PC-9 (cell line): ENCODE measurements at regions of chr2 and their contacts with region 1.

Region 1: DNA sequence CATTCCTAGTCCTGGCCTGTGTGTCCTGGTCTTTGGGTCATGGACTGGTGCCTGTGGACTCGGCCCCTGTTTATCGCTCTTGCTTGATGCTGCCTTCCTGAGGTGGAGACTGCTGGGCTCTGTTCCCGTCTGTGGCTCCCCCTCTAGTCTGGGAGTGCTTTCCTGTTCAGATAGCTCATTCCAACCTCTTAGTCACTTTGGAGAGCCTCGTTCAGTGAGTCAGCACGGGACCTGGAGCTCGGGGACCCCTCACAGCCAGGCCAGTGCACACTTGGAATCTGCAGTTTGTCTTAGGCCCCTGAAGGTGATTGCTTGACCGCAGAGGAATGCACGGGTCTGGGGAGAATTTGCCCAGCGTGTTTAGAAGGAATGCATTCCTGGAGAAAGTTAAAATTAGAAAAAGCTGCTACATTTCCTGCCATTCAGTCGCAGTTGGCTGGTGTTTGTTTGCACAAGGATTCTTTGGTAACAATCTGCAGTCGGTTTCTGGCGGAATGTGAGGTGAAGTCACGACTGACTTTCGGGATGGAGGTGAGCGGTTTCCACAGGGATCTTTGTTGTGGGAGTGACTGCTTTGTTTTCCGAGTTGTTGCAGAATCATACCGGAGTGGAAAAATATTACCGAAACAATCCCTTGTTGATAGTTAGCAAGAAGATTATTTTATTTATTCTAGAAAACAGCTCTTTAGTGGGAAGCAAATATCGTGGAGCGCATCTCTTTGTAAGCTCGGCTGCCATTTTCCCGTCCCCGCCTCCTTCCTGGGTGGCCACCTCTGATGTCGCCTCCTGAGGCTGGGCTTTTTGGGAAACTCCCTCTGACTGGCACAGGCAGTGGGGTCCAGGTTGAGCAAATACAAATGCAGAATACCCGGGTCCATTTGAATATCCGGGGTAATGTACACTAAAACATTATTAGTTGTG is 29.6 kb downstream of the SH3BP4 start:
- DNase-seq: peak; percentile 98 to 100
- H3K4me3 ChIP-seq: peak overlapping the region; percentile 52
- H3K27ac ChIP-seq: peak overlapping the region; percentile 96
- H3K4me1 ChIP-seq: peaks cover 78% of the 10 kb centered on the region
- H3K27me3 ChIP-seq: no peaks in the 10 kb centered on the region
- CTCF ChIP-seq: no peak

Region 2: GRCh38 chr2:234135720-234136221 is 845.7 kb before region 1 on chr2:
- CTCF ChIA-PET with region 1: no interaction called
- POLR2A ChIA-PET with region 1: no interaction called
- intact Hi-C with region 1: loop called (anchors 2 kb)
- DNase-seq: peak; percentile 91 to 93
- H3K4me3 ChIP-seq: no peak overlapping the region
- H3K27ac ChIP-seq: peak overlapping the region; percentile 66
- H3K4me1 ChIP-seq: peaks cover 30% of the 10 kb centered on the region
- H3K27me3 ChIP-seq: no peaks in the 10 kb centered on the region
- CTCF ChIP-seq: peak; percentile 90

Region 3: DNA sequence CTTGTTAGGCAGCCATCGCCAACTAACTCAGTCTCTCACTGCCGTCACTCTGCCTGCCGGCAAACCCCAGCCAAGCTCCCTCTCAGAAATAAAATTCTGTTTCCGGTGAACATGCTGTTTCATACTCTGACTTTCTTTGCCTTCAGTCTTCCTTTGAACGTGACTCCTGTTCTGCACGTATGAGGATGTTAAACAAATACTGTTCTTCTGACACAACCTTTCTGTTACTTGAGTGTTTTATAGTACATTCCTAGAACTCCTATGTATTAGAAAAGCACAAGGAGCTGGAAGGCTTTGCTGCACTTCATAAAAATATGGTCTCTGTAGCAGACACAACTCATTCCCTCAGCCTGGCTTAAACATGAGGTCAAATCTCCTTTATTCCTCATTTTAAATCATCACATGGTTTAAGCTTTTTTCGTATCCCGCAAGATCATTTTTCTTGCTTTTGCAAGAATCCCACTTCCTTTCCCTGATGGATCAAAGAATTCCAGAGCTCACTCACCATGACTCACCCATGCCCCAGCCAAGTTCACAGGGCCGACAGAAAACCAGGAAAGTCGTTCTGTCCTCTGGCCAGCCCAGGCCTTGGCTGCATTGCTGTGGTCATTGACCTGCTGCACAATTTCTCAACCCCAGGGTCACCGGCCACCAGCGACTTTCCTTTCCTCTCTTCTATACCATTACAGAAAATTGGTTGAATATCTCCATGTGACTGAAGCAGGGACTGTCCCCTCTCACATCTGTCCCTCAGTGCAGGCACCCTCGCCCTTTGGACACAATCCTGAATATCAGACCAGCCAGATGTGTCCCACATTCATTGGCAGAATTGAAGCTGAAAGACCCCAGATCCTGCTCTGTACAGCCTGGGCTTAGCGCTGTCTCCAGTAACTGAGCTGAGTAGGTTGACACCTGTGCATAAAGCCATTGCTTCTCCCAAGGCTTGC is 301.4 kb before region 1 on chr2:
- CTCF ChIA-PET with region 1: no interaction called
- POLR2A ChIA-PET with region 1: no interaction called
- intact Hi-C with region 1: loop called (anchors 5 kb)
- DNase-seq: peak; percentile 86 to 96
- H3K4me3 ChIP-seq: no peak overlapping the region
- H3K27ac ChIP-seq: peak overlapping the region; percentile 90
- H3K4me1 ChIP-seq: peaks cover 75% of the 10 kb centered on the region
- H3K27me3 ChIP-seq: no peaks in the 10 kb centered on the region
- CTCF ChIP-seq: no peak

Region 4: DNA sequence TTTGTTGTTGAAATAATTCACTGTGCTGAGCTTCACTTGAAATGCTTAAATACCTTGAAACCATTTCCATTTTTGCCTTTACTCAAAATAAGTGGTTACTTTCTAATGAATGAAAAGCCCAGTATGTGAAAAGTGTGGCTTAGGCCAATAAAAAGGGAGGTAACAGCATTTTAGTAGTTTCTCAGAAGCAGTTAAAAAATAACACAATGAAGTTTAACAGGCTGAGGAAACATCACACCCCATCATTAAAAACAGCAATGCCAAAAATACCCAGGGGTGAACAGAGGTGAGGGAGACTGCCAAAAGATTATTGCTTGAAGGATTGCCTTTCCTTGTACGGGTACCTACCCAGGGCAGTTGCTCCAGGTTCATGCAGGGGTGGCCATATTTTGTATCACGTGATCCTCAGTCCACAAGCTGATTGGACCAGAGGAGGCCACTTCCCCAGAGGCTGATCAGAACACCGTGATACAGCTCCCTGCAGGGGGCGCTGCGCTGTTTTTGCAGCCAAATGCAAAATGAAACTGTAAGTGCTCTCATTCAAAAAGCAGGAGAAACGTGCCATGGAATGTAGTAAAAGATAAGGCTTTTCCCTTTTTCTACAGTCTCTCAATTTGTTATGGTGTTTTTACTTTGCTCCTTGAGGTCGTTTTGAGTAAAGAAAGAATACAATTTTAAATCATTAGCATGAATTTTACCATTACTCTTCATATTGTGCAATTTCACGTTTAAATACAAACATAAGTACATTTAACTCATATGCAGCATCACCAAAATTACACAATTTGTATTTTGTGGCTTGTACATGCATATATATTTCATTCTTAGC is 99.8 kb before region 1 on chr2:
- CTCF ChIA-PET with region 1: interaction called, 9 read pairs
- POLR2A ChIA-PET with region 1: interaction called, 3 read pairs
- intact Hi-C with region 1: loop called (anchors 1 kb)
- DNase-seq: peak; percentile 88 to 92
- H3K4me3 ChIP-seq: peak overlapping the region; percentile 41; the same call in 1 of the 2 replicates
- H3K27ac ChIP-seq: peak overlapping the region; percentile 82
- H3K4me1 ChIP-seq: peaks cover 47% of the 10 kb centered on the region
- H3K27me3 ChIP-seq: no peaks in the 10 kb centered on the region
- CTCF ChIP-seq: peak; percentile 97

Region 5: DNA sequence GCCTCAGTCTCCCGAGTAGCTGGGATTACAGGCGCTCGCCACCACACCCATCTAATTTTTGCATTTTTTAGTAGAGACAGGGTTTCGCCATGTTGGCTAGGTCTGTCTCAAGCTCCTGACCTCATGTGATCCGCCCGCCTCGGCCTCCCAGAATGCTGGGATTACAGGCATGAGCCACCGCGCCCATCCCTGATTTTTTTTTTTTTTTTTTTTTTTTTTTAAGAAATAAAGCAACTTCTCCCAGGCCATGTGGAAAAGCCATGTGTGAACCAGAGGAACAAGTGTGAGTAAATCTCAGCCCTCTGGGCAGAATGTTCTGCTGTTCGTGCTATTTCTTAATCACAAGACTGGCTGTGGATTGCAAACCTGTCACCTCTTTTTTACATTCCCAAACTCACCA is 36.0 kb before region 1 on chr2:
- CTCF ChIA-PET with region 1: no interaction called
- POLR2A ChIA-PET with region 1: no interaction called
- intact Hi-C with region 1: no loop called
- DNase-seq: no peak
- H3K4me3 ChIP-seq: no peak overlapping the region
- H3K27ac ChIP-seq: no peak overlapping the region
- H3K4me1 ChIP-seq: no peaks in the 10 kb centered on the region
- H3K27me3 ChIP-seq: no peaks in the 10 kb centered on the region
- CTCF ChIP-seq: no peak

Region 6: GRCh38 chr2:235008584-235009044 is 27.2 kb after region 1 on chr2:
- CTCF ChIA-PET with region 1: interaction called, 5 read pairs
- POLR2A ChIA-PET with region 1: interaction called, 14 read pairs
- intact Hi-C with region 1: loop called (anchors 1 kb)
- DNase-seq: peak; percentile 83 to 99
- H3K4me3 ChIP-seq: peak overlapping the region; percentile 36
- H3K27ac ChIP-seq: peak overlapping the region; percentile 89
- H3K4me1 ChIP-seq: peaks cover 65% of the 10 kb centered on the region
- H3K27me3 ChIP-seq: no peaks in the 10 kb centered on the region
- CTCF ChIP-seq: no peak

Region 7: DNA sequence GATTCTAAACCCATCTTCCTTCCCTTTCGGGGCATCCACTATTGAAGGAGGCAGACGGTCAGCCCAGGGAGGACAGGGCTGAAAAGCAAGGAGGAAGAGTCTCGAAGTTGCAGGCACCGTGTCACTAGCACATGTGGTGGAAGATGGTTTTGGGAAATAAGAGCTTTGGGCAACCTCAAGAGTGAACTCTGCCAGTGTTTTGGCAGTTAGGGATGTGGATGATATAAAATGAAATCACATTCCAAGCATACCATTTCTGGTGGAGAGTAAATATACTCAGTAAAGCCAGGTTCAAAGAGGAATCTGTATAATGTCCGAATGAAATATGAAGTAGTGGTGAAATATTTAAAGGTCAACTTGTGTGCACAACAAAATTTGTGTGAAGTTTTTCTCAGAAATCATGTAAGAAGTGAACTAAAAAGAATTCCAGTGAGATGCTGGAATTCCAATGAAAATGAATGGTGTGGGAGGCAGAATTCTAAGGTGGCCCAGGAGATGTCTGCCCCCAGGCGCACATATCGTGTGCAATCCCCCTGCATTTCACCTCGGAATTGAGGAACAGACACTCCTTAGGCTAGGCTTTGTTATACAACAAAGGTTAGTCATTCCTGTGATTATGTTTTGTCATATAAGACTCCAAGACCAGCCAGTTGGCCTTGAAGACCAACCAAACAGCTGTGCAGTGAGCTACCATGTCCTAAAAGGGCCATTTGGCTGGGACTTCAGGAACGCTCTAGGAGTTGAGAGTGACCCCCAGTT is 117.5 kb after region 1 on chr2:
- CTCF ChIA-PET with region 1: no interaction called
- POLR2A ChIA-PET with region 1: interaction called, 10 read pairs
- intact Hi-C with region 1: no loop called
- DNase-seq: peak in 1 of 2 experiments; percentile 90
- H3K4me3 ChIP-seq: no peak overlapping the region
- H3K27ac ChIP-seq: peak overlapping the region; percentile 23
- H3K4me1 ChIP-seq: peaks cover 24% of the 10 kb centered on the region
- H3K27me3 ChIP-seq: no peaks in the 10 kb centered on the region
- CTCF ChIP-seq: no peak

Region 8: DNA sequence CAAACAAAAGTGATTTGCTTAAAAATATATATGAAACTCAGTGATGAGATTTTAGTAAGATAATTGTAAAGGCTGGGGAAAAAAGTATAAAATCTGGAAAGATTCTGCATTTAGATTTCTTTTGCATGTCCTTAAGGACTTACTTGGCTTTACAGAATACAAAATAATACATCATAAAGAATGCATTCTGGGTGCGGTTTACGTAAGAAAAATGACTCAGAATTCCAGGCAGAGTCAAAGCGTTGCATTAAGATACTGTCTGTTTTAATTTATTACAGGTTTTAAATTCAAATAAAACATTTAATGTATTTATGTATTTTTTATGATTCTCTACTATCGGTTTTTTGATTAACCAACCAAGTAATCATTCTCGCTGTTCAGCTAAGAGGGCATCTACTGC is 148.4 kb after region 1 on chr2:
- CTCF ChIA-PET with region 1: no interaction called
- POLR2A ChIA-PET with region 1: no interaction called
- intact Hi-C with region 1: no loop called
- DNase-seq: no peak
- H3K4me3 ChIP-seq: no peak overlapping the region
- H3K27ac ChIP-seq: no peak overlapping the region
- H3K4me1 ChIP-seq: no peaks in the 10 kb centered on the region
- H3K27me3 ChIP-seq: no peaks in the 10 kb centered on the region
- CTCF ChIP-seq: no peak

Region 9: DNA sequence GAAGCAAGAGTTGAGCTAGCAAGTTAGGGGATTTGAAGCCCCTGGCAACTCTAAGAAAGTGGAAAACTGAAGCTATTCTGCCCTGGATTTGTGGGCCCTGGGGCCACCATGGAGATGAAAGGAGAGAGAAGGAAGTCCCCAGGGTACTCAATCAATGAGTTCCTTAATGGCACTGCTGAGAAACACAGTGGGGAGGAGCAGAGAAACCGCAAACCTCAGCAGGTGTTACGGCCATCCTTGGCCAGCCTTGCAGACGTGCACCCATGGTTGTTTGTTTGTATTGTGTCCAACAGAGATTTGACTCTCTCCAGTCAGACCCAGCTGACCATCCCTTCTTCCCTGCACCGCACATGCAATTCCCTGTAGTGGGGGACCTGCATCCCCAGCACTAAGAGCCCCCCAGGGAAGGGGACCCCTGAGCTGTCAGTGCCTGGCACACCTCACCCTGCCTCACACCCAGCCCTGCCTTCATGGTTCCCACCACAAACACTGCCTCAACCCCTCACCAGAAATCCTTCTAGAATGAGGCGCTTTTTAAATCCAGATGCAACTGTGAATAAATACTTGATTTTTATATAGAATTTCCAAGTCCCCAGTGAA is 225.6 kb after region 1 on chr2:
- CTCF ChIA-PET with region 1: no interaction called
- POLR2A ChIA-PET with region 1: no interaction called
- intact Hi-C with region 1: no loop called
- DNase-seq: no peak
- H3K4me3 ChIP-seq: no peak overlapping the region
- H3K27ac ChIP-seq: no peak overlapping the region
- H3K4me1 ChIP-seq: no peaks in the 10 kb centered on the region
- H3K27me3 ChIP-seq: no peaks in the 10 kb centered on the region; the same call in 1 of the 2 replicates
- CTCF ChIP-seq: no peak